Natural killer cell (primary cell): ENCODE measurements at regions of chr2 and their contacts with region 1.

Region 1: GRCh38 chr2:8456151-8456845 is 225.6 kb upstream of the ID2 start:
- DNase-seq: peak; percentile 44 to 80
- ATAC-seq: peak; percentile 46 to 64 (median 51)
- H3K4me3 ChIP-seq: peak overlapping the region; percentile 19
- H3K4me3 Mint-ChIP-seq: peak overlapping the region; percentile 95
- H3K27ac ChIP-seq: peak overlapping the region; percentile 99
- H3K27ac Mint-ChIP-seq: peak overlapping the region; percentile 99 to 100
- H3K4me1 ChIP-seq: peaks cover 80% of the 10 kb centered on the region
- H3K4me1 Mint-ChIP-seq: peaks cover 80 to 85% of the 10 kb centered on the region in 2 donors
- H3K27me3 ChIP-seq: no peaks in the 10 kb centered on the region
- H3K27me3 Mint-ChIP-seq: no peaks in the 10 kb centered on the region
- CTCF ChIP-seq: no peak

Region 2: GRCh38 chr2:8432706-8433336 is 23.5 kb before region 1 on chr2:
- intact Hi-C with region 1: loop called (anchors 2 kb)
- DNase-seq: peak in 1 of 2 donors; percentile 16
- ATAC-seq: peak; percentile 70 to 77 (median 75)
- H3K4me3 ChIP-seq: no peak overlapping the region
- H3K4me3 Mint-ChIP-seq: peak overlapping the region; percentile 79
- H3K27ac ChIP-seq: peak overlapping the region; percentile 48
- H3K27ac Mint-ChIP-seq: peak overlapping the region; percentile 78 to 92
- H3K4me1 ChIP-seq: peaks cover 19% of the 10 kb centered on the region
- H3K4me1 Mint-ChIP-seq: peaks cover 70 to 78% of the 10 kb centered on the region in 2 donors
- H3K27me3 ChIP-seq: no peaks in the 10 kb centered on the region
- H3K27me3 Mint-ChIP-seq: no peaks in the 10 kb centered on the region
- CTCF ChIP-seq: no peak

Region 3: GRCh38 chr2:8441986-8442385 is 14.3 kb before region 1 on chr2:
- intact Hi-C with region 1: loop called (anchors 2 kb)
- DNase-seq: no peak
- ATAC-seq: peak in 2 of 3 donors; percentile 46 to 57
- H3K4me3 ChIP-seq: no peak overlapping the region
- H3K4me3 Mint-ChIP-seq: peak overlapping the region; percentile 72
- H3K27ac ChIP-seq: no peak overlapping the region
- H3K27ac Mint-ChIP-seq: peak overlapping the region; percentile 81
- H3K4me1 ChIP-seq: peaks cover 43% of the 10 kb centered on the region
- H3K4me1 Mint-ChIP-seq: peaks cover 59 to 60% of the 10 kb centered on the region in 2 donors
- H3K27me3 ChIP-seq: no peaks in the 10 kb centered on the region
- H3K27me3 Mint-ChIP-seq: no peaks in the 10 kb centered on the region
- CTCF ChIP-seq: no peak

Region 4: GRCh38 chr2:8477552-8478470 is 21.5 kb after region 1 on chr2:
- intact Hi-C with region 1: loop called (anchors 1 kb)
- DNase-seq: peak; percentile 44 to 68
- ATAC-seq: peak; percentile 46 to 69 (median 66)
- H3K4me3 ChIP-seq: peak overlapping the region; percentile 17
- H3K4me3 Mint-ChIP-seq: peak overlapping the region; percentile 86
- H3K27ac ChIP-seq: peak overlapping the region; percentile 93
- H3K27ac Mint-ChIP-seq: peak overlapping the region; percentile 86 to 100
- H3K4me1 ChIP-seq: peaks cover 94% of the 10 kb centered on the region
- H3K4me1 Mint-ChIP-seq: peaks cover 97 to 100% of the 10 kb centered on the region in 2 donors
- H3K27me3 ChIP-seq: no peaks in the 10 kb centered on the region
- H3K27me3 Mint-ChIP-seq: no peaks in the 10 kb centered on the region
- CTCF ChIP-seq: no peak

Region 5: DNA sequence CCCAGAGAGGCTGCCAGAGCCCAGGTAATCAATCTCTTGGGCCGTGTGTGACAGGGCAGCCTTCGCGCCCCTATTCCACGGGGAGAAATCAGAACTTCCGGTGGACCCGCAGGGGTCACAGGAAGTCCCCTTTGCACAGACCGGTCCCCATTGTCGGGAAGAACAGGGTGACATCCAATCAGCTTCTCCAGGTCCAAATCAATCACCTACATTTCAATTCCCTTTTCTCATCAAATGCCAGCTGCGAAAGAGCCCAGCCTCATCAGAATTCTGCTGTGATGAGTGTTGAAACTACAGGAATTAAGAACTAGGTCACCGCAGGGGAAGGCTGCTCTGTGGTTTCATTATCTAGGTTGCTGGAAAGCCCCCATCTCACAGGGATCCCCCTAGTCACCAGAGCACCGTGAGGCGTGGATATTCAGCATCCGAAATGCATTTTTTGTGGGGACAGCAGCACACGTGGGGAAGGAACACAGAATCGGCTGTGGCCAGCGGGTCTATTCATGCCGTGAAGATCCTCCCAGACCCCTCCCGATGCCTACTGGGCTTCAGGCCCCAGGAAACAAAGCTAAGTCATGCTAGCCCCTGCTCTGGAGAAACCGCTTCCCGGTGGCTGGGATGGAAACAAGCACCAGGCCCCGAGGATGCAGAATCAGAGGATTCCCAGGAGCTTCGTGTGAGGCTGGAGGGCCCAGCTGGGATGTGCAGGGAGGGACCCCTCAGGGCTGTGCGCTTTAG is 31.9 kb after region 1 on chr2:
- intact Hi-C with region 1: loop called (anchors 1 kb)
- DNase-seq: peak; percentile 71 to 93
- ATAC-seq: peak; percentile 81 to 91 (median 91)
- H3K4me3 ChIP-seq: peak overlapping the region; percentile 30
- H3K4me3 Mint-ChIP-seq: peak overlapping the region; percentile 98
- H3K27ac ChIP-seq: peak overlapping the region; percentile 95
- H3K27ac Mint-ChIP-seq: peak overlapping the region; percentile 97 to 100
- H3K4me1 ChIP-seq: peaks cover 59% of the 10 kb centered on the region
- H3K4me1 Mint-ChIP-seq: peaks cover 68 to 69% of the 10 kb centered on the region in 2 donors
- H3K27me3 ChIP-seq: no peaks in the 10 kb centered on the region
- H3K27me3 Mint-ChIP-seq: no peaks in the 10 kb centered on the region
- CTCF ChIP-seq: no peak

Region 6: DNA sequence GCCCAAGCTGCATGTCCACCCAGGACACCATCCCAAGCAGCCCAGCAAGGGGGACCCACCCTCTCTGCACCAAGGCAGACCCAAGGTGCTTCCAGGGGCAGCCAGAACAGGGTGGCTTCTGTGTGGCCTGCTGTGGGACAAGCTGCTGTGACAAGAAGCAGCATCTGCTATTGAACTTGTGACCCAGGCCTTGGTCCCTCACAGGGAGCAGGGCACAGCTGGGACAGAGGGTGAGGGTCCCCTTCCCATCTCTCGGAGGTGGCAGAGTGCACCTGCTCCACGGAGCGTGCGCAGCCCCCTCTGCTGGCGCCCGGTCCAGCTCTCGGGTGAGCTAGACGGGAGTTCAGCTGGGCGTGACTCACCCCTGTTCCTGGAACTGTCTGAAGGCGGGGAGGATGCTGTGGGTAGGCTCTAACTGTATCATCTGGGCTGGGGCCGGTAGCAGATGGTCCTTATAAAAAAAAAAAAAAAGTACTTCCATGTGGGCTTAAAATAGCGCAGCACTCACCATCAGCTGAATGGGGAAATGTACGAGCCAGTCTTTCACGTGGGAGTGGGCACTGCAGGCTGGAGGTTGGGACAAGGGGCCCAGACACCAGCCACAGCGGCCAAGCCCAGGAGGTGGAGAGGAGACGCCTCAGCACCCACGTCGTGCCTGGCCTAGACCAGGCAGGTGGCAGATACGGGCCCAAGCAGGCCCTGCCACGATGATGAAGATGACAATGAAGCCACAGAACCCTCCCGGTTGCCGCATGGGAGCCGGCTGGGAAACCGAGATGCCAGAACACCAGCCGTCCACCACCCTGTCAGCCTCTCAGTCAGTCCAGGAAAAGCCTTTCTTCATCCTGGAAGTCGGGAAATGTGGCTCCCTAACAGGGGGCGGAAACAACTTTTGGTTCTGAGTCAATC is 88.7 kb after region 1 on chr2:
- intact Hi-C with region 1: loop called (anchors 10 kb)
- DNase-seq: peak; percentile 71 to 88
- ATAC-seq: peak; percentile 67 to 78 (median 69)
- H3K4me3 ChIP-seq: no peak overlapping the region
- H3K4me3 Mint-ChIP-seq: peak overlapping the region; percentile 50
- H3K27ac ChIP-seq: peak overlapping the region; percentile 87
- H3K27ac Mint-ChIP-seq: peak overlapping the region; percentile 99
- H3K4me1 ChIP-seq: peaks cover 74% of the 10 kb centered on the region
- H3K4me1 Mint-ChIP-seq: peaks cover 73 to 82% of the 10 kb centered on the region in 2 donors
- H3K27me3 ChIP-seq: no peaks in the 10 kb centered on the region
- H3K27me3 Mint-ChIP-seq: no peaks in the 10 kb centered on the region
- CTCF ChIP-seq: peak; percentile 45